ENCODE measurements at regions of chr21 and their contacts with region 1.

Region 1: DNA sequence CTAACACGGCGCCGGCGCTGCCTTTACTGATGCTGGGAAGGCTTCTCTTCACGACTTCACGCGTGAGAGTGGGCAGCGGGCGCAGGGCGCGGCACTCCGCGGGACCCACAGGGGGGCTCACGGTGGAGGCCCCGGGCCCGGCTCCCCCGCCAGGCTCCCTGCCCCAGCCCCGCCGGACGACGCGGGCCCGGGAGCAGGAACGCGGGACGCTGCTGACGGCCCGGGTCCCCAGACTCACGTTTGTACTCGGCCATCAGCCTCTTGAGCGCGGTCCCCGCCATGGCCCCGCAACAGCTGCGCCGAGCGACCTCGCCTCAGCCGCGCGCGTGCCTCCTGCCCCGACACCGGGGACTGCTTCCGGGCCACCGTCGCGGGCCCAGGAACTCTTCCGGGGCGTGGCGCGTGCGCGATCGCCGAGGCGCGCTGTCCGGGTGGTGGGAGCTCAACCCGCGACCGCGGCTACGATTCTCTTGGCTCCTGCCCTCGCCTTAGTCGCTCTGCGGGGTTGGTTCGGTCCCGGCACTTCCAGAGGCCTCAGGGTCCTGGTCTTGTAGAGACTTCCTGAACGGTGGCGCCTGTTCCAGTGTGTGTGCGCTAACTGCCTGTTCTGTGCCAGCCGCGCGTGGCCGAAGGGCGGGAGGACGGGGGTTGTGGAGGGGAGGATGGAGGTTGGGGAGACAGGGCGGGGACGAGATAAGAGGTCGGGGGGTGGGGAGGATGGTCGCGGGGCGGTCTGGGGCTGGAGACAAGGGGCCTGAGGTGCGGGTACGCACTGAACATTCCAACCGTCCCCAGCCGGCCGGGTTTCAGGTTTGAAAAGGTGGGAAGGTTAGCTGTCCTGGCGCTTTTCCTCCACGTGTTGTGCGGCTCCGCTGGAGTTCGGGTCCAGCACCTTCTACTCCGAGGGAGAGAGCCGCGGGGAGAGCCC is at the start of gene UBE2G2:
- DNase-seq: no peak
- H3K4me3 ChIP-seq: peak within 1 kb of the TSS; percentile 77
- H3K27me3 ChIP-seq: no peaks in the 10 kb centered on the region
- CTCF ChIP-seq: no peak
- polyA plus RNA-seq, gene UBE2G2: 67.6 and 93.2 TPM in 2 replicates

Region 2: DNA sequence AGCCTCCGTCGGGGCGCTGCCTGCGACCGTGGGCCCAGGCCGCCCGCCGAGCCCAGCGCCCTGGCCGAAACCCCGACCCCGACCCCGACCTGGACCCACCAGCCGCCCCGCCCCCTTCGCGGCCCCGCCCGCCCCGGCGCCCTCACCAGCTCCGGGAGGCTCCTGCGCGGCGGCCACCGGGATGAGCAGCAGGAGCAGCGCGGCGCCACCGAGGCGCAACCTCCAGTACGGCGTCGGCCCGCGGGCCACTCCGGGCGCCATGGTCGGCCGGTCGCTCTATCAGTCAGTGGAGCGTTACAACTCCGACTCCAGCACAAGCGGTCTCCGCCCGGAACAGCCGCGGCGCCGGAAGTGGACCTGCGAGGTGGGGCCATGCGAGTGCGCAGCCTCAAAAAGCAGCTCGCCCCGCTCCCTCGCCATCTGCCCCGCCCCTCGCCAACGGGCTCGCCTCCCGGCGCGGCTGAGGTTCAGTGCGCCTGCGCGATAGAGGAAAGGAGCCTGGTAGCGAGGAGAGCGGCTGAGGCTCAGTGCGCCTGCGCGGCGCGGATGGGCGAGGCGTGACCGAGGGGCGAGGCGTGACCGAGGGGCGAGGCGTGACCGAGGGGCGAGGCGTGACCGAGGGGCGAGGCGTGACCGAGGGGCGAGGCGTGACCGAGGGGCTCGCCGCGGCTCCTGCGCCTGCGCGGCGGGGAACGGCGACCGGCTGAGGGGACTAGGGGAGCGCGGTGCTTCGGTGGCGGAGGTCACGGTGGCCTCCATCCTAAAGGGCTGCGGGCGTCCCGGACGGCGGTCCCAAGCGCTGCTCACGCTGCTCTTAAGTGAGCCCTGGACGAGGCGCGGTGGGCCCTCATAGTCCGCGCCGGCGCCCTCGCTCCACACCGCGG is 71.9 kb after region 1 on chr21 and contains the start of gene PTTG1IP:
- CTCF ChIA-PET with region 1: interaction called, 15 read pairs
- POLR2A ChIA-PET with region 1: interaction called, 4 read pairs
- DNase-seq: peak; percentile 73
- H3K4me3 ChIP-seq: peak within 1 kb of the TSS; percentile 78
- H3K27me3 ChIP-seq: no peaks in the 10 kb centered on the region
- CTCF ChIP-seq: no peak
- polyA plus RNA-seq, gene PTTG1IP: 234 and 249 TPM in 2 replicates

Region 3: GRCh38 chr21:44927587-44928461 is 126.1 kb after region 1 on chr21:
- CTCF ChIA-PET with region 1: interaction called, 26 read pairs
- POLR2A ChIA-PET with region 1: interaction called, 3 read pairs
- DNase-seq: no peak
- H3K4me3 ChIP-seq: no peak overlapping the region
- H3K27me3 ChIP-seq: peaks cover 24% of the 10 kb centered on the region
- CTCF ChIP-seq: peak; percentile 24; the same call in 1 of the 2 replicates

Region 4: DNA sequence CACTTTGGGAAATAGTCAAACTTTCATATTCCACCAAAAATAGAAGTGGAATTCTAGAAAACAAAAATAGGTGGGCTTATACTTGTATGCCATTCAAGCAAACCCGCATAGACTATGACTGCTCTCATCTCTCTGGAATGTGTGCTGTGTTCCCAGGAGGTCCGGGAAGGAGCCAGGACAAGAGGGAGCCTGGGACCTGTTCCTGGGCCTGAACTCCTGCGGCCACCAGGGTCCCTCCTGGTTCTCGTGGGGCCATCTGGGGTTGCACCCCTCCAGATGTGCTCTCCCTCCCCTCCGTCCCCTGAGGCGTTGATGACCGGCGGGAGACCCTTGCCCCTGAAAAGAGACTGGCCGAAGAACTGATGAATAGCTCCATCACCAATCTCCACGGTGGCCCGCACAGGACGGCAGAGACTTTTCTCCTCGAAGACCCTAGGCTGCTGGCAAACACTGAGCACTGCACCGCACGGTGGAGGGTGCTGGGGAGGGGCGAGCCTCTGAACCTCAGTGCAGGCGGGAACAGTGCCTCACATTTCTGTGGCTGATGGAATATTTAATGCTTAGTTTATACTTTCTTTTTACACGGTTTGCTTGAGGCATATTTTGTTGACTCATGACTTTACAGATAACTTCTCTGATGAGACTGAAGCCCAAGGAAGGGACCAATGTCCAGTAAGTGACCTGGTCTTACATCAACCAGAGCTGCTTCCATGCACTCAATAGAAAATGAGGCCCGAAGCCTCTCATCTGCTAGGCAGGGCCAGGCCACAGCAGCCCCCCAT is 263.1 kb after region 1 on chr21:
- CTCF ChIA-PET with region 1: no interaction called
- POLR2A ChIA-PET with region 1: no interaction called
- DNase-seq: no peak
- H3K4me3 ChIP-seq: no peak overlapping the region
- H3K27me3 ChIP-seq: peaks cover 7% of the 10 kb centered on the region
- CTCF ChIP-seq: no peak

Region 5: GRCh38 chr21:45125357-45125756 is 323.6 kb after region 1 on chr21:
- CTCF ChIA-PET with region 1: no interaction called
- POLR2A ChIA-PET with region 1: no interaction called
- DNase-seq: no peak
- H3K4me3 ChIP-seq: no peak overlapping the region
- H3K27me3 ChIP-seq: no peaks in the 10 kb centered on the region
- CTCF ChIP-seq: no peak